PC-3 (cell line): ENCODE measurements at regions of chr19 and their contacts with region 1.

Region 1: GRCh38 chr19:40433391-40434216 is 7.8 kb upstream of the SERTAD1 start:
- DNase-seq: peak; percentile 89
- ATAC-seq: peak; percentile 93
- H3K4me3 ChIP-seq: peak overlapping the region; percentile 73
- H3K27ac ChIP-seq: peak overlapping the region; percentile 94
- H3K4me1 ChIP-seq: peaks cover 16% of the 10 kb centered on the region; the same call in 1 of the 2 replicates
- H3K27me3 ChIP-seq: no peaks in the 10 kb centered on the region
- CTCF ChIP-seq: no peak

Region 2: GRCh38 chr19:40570313-40571004 is 136.9 kb after region 1 on chr19:
- CTCF ChIA-PET with region 1: no interaction called
- POLR2A ChIA-PET with region 1: interaction called, 19 read pairs
- intact Hi-C with region 1: no loop called
- DNase-seq: peak; percentile 98
- ATAC-seq: peak; percentile 93
- H3K4me3 ChIP-seq: peak overlapping the region; percentile 71
- H3K27ac ChIP-seq: peak overlapping the region; percentile 54; the same call in 1 of the 2 replicates
- H3K4me1 ChIP-seq: peaks cover 6% of the 10 kb centered on the region
- H3K27me3 ChIP-seq: no peaks in the 10 kb centered on the region
- CTCF ChIP-seq: no peak